ENCODE measurements at regions of chr19 and their contacts with region 1.

Region 1: GRCh38 chr19:6501740-6502648 is at the start of gene TUBB4A:
- DNase-seq: peak; percentile 84 to 99 (median 90)

Region 2: DNA sequence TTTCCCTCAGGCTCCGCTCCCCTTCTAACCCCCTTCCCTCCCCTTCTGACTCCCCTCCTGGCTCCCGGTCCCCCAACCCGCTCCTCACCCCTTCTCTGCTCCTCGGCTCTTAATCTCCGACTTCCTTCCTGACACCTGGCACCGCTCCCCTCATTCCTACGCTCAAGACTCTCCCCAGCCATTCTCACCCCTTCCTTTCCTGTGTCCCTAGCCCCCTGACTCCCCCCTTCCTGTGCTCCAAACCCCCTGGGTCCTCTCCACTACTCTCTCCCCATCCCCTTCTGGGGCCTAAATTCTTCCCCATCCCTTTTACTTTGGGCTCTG is 140.0 kb before region 1 on chr19:
- intact Hi-C with region 1: loop called (anchors 10 kb)
- DNase-seq: no peak

Region 3: DNA sequence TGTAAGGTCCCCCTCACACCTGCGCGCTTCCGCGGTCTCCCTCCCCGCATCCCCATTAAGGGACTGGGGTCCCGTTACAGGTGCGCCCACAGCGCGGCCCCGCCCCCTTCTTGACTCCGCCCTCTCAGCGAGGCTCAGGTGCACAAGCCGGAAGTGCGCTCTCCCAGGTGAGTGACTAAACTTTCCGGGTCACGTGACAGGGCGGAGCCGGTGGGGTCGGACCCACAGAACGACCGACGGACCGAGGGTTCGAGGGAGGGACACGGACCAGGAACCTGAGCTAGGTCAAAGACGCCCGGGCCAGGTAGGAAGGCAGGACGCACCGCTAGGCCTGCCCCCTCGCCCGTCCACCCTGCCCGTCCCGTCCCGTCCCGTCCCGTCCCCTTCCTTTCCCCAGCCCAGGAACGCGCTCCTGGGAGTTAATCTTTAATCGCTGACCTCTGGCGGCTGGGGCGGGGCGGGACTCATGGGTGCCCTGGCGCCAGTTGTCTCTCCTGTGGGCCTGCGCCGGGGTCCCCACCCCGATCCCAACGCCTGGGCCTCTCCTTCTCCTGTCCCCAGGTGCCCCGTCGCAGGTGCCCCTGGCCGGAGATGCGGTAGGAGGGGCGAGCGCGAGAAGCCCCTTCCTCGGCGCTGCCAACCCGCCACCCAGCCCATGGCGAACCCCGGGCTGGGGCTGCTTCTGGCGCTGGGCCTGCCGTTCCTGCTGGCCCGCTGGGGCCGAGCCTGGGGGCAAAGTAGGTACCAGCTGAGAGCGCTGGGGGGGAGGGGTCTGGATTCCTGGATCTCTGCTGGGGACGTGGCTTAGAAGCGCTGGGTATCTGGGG is 37.7 kb before region 1 on chr19 and contains the start of gene CRB3:
- intact Hi-C with region 1: no loop called
- DNase-seq: no peak

Region 4: GRCh38 chr19:6577476-6578125 is 75.6 kb after region 1 on chr19:
- intact Hi-C with region 1: no loop called
- DNase-seq: no peak